ENCODE measurements at regions of chr16 and their contacts with region 1.

Region 1: GRCh38 chr16:19886073-19886941 is 1.7 kb upstream of the GPRC5B start:
- DNase-seq: peak; percentile 83
- H3K4me3 Mint-ChIP-seq: peak overlapping the region; percentile 75
- H3K27ac Mint-ChIP-seq: no peak overlapping the region
- H3K4me1 Mint-ChIP-seq: peaks cover 22% of the 10 kb centered on the region
- H3K27me3 Mint-ChIP-seq: peaks cover 35% of the 10 kb centered on the region

Region 2: GRCh38 chr16:19555162-19555937 is 331.0 kb before region 1 on chr16 and contains the start of gene VPS35L:
- CTCF ChIA-PET with region 1: interaction called, 14 read pairs
- POLR2A ChIA-PET with region 1: no interaction called
- DNase-seq: peak; percentile 96
- H3K4me3 Mint-ChIP-seq: peak within 1 kb of the TSS; percentile 93
- H3K27ac Mint-ChIP-seq: peak within 1 kb of the TSS; percentile 91
- H3K4me1 Mint-ChIP-seq: peaks cover 25% of the 10 kb centered on the region
- H3K27me3 Mint-ChIP-seq: no peaks in the 10 kb centered on the region
- total RNA-seq, gene VPS35L: 59.3 to 59.6 TPM

Region 3: GRCh38 chr16:19595043-19595767 is 291.1 kb before region 1 on chr16:
- CTCF ChIA-PET with region 1: interaction called, 16 read pairs
- POLR2A ChIA-PET with region 1: no interaction called
- DNase-seq: no peak
- H3K4me3 Mint-ChIP-seq: no peak overlapping the region
- H3K27ac Mint-ChIP-seq: no peak overlapping the region
- H3K4me1 Mint-ChIP-seq: no peaks in the 10 kb centered on the region
- H3K27me3 Mint-ChIP-seq: no peaks in the 10 kb centered on the region

Region 4: DNA sequence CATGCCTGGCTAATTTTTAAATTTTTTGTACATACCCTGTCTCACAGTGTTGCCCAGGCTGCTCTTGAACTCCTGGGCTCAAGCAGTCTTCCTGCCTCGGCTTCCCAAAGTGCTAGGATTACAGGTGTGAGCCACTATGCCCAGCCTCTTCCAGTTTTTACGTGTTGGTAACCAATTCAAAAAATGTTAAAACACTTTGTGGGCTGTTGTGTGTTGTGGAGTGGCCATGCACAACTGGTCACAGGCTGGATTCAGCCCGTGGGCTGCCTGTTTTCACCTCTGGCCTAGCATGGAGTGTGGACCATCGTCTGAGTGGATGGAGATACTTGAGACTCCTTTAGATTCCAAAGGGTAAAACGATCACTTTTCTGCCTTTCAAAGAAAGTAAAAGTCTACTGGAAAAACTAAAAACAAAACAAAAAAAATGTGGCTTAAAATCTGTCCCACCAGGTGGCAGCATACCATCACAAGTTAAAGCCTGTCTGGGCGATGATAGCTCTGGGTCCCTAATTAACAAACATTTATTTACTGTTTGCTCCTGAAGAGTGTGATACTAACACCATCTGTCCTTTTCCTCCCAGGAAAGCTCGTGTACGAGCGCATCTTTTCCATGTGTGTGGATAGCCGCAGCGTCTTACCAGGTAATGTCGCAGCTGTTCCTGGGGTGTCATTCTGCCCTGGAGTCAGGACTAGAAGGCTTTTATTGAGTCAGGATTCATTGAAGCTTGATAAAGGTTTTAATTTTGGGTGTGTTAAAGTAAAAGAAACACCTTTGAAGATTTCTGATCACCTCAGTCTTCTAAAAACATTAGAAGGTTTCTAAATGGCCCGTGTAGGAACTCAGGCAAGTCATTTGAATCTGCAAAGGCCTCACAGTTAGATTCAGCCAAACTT is 285.0 kb before region 1 on chr16:
- CTCF ChIA-PET with region 1: interaction called, 16 read pairs
- POLR2A ChIA-PET with region 1: interaction called, 3 read pairs
- DNase-seq: peak; percentile 46
- H3K4me3 Mint-ChIP-seq: no peak overlapping the region
- H3K27ac Mint-ChIP-seq: no peak overlapping the region
- H3K4me1 Mint-ChIP-seq: peaks cover 5% of the 10 kb centered on the region
- H3K27me3 Mint-ChIP-seq: no peaks in the 10 kb centered on the region

Region 5: GRCh38 chr16:19822533-19822932 is 63.8 kb before region 1 on chr16:
- CTCF ChIA-PET with region 1: no interaction called
- POLR2A ChIA-PET with region 1: no interaction called
- DNase-seq: no peak
- H3K4me3 Mint-ChIP-seq: no peak overlapping the region
- H3K27ac Mint-ChIP-seq: no peak overlapping the region
- H3K4me1 Mint-ChIP-seq: no peaks in the 10 kb centered on the region
- H3K27me3 Mint-ChIP-seq: no peaks in the 10 kb centered on the region

Region 6: GRCh38 chr16:19851476-19851875 is 34.8 kb before region 1 on chr16:
- CTCF ChIA-PET with region 1: no interaction called
- POLR2A ChIA-PET with region 1: no interaction called
- DNase-seq: no peak
- H3K4me3 Mint-ChIP-seq: no peak overlapping the region
- H3K27ac Mint-ChIP-seq: no peak overlapping the region
- H3K4me1 Mint-ChIP-seq: no peaks in the 10 kb centered on the region
- H3K27me3 Mint-ChIP-seq: no peaks in the 10 kb centered on the region

Region 7: GRCh38 chr16:19997264-19997663 is 111.0 kb after region 1 on chr16:
- CTCF ChIA-PET with region 1: no interaction called
- POLR2A ChIA-PET with region 1: no interaction called
- DNase-seq: no peak
- H3K4me3 Mint-ChIP-seq: no peak overlapping the region
- H3K27ac Mint-ChIP-seq: no peak overlapping the region
- H3K4me1 Mint-ChIP-seq: no peaks in the 10 kb centered on the region
- H3K27me3 Mint-ChIP-seq: no peaks in the 10 kb centered on the region

Measured in activated CD4-positive, alpha-beta T cell treated with anti-CD3 and anti-CD28 coated beads, Interleukin-2, amount 10 ng/mL, durations not matched to agents 7 days and 5 days (primary cell).